ENCODE measurements at regions of chr14 and their contacts with region 1.

Region 1: GRCh38 chr14:64986578-64987571 is at the start of gene FNTB:
- DNase-seq: peak; percentile 96
- ATAC-seq: peak; percentile 98 to 99 (median 98)
- H3K4me3 ChIP-seq: peak within 1 kb of the TSS; percentile 54 to 94 (median 80)
- H3K27ac ChIP-seq: peak within 1 kb of the TSS; percentile 9 to 94 (median 87)
- H3K4me1 ChIP-seq: peaks cover 5 to 44% (median 20%) of the 10 kb centered on the region in 9 donors
- H3K27me3 ChIP-seq: no peaks in the 10 kb centered on the region
- CTCF ChIP-seq: peak; percentile 55 to 97 (median 83)
- total RNA-seq, gene FNTB: 14.6 to 20.8 (median 16.9) TPM

Region 2: DNA sequence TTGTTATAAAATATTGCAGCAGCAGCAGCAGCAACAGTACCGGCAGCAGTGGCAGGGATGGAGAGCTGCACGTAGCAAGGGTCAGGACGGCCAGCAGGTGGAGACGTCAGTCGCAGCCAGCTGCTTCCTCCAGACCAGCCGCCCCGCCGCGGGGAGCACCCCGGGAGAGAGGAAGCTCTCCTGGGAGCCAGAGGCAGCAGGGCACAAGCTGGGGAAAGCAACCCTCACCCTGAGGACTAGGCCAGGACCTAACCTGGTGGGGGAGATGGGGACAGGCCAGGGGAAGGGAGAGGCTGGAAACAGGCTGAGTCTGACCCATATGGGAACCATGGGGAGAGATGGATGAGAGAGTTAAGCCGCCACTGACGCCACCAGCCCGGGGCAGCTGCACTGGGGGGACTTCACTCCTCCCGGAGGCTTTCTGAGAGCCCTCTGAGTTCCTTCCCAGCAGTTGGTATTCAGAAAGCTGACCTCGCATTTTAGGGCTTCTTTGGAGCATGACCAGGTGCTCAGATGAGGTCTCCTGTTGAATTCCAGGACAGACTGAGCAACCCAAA is 163.5 kb before region 1 on chr14:
- intact Hi-C with region 1: loop called in 7 of 10 experiments (anchors 2 to 10 kb)
- DNase-seq: peak; percentile 73 to 80
- ATAC-seq: peak; percentile 81 to 91 (median 86)
- H3K4me3 ChIP-seq: peak overlapping the region in 1 of 10 donors; percentile 11
- H3K27ac ChIP-seq: peak overlapping the region in 4 of 10 donors; percentile 18 to 36 (median 24)
- H3K4me1 ChIP-seq: peaks cover 5 to 46% (median 29%) of the 10 kb centered on the region in 9 donors
- H3K27me3 ChIP-seq: peaks cover 0 to 3% (median 0%) of the 10 kb centered on the region in 7 donors
- CTCF ChIP-seq: peak; percentile 34 to 86 (median 79)

Region 3: GRCh38 chr14:64919622-64920021 is 67.3 kb before region 1 on chr14:
- intact Hi-C with region 1: loop called in 4 of 10 experiments (anchors 2 to 10 kb)
- DNase-seq: no peak
- ATAC-seq: no peak
- H3K4me3 ChIP-seq: no peak overlapping the region
- H3K27ac ChIP-seq: peak overlapping the region in 2 of 10 donors; percentile 24 to 36
- H3K4me1 ChIP-seq: peaks cover 12 to 61% (median 56%) of the 10 kb centered on the region in 9 donors
- H3K27me3 ChIP-seq: no peaks in the 10 kb centered on the region
- CTCF ChIP-seq: no peak

Region 4: DNA sequence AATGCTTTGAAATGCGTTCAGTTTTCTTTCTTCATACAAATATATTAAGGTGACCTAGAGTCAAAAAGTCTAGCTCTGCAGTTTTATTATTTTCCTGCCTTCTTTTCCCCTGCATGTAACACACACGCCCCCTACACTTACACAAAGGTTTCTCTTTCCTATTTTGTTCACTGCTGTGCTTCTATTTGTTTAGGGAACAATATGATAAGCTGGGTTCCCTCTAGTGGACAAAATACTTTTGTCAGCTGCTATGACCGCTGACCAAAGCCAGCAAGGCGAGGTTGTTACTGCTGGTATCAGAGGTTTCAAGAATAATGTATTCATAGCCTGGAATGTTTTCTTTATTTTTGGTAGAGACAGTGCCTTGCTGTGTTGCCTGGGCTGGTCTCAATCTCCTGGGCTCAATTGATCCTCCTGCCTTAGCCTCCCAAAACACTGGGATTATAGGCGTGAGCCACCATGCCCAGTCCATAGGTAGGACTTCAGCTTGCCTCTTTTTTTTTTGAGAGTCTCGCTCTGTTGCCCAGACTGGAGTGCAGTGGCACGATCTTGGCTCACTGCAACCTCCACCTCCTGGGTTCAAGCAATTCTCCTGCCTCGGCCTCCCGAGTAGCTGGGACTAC is 33.2 kb after region 1 on chr14:
- intact Hi-C with region 1: loop called in 3 of 10 experiments (anchors 2 to 5 kb)
- DNase-seq: peak in 1 of 2 donors; percentile 33
- ATAC-seq: peak; percentile 65 to 95 (median 90)
- H3K4me3 ChIP-seq: peak overlapping the region in 1 of 10 donors; percentile 1
- H3K27ac ChIP-seq: peak overlapping the region in 2 of 10 donors; percentile 4 to 16
- H3K4me1 ChIP-seq: peaks cover 0 to 15% (median 8%) of the 10 kb centered on the region in 9 donors
- H3K27me3 ChIP-seq: no peaks in the 10 kb centered on the region
- CTCF ChIP-seq: peak; percentile 42 to 80 (median 69)

Region 5: DNA sequence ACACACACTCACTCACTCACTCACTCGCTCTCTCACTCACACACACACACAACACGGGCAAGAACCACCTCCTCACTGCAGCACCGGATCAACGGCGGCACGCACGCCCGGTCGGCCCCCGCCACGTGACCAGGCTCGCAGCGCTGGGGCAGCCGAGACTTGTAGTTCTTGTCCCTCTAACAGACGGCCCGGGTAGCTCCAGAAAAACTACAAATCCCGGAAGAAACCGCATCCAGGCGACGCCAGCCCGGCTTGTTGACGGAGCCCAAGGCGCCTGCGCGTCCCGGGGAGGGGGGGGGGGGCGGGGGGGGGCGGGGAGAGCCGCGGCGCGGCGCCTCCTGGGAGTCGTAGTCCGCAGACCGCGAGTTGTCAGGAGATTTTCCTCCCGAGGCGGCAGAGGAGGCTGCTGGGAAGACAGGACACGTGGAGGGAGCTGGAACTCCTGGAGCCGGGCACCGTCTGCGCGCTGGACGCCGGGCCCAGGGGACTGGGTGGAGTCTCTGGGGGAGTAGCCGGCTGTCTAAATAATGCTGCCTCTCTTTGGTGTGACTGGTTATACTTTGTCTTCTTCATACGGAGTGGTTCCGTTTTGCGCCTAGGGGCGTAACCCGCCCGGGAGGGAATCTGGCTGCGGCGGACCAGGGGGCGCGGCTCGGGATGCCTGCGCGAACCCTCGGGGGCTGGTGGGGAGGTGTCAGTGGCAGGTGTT is 115.7 kb after region 1 on chr14 and contains the start of gene MAX:
- intact Hi-C with region 1: loop called in 4 of 10 experiments (anchors 2 to 10 kb)
- DNase-seq: peak; percentile 97 to 98
- ATAC-seq: peak; percentile 96 to 97 (median 97)
- H3K4me3 ChIP-seq: peak within 1 kb of the TSS; percentile 64 to 98 (median 93)
- H3K27ac ChIP-seq: peak within 1 kb of the TSS; percentile 52 to 98 (median 92)
- H3K4me1 ChIP-seq: peaks cover 10 to 46% (median 39%) of the 10 kb centered on the region in 9 donors
- H3K27me3 ChIP-seq: no peaks in the 10 kb centered on the region
- CTCF ChIP-seq: peak in 1 of 9 donors; percentile 6
- total RNA-seq, gene MAX: 54.5 to 95.7 (median 73.7) TPM

Region 6: GRCh38 chr14:65824285-65824977 is 837.6 kb after region 1 on chr14:
- intact Hi-C with region 1: loop called in 2 of 10 experiments (anchors 5 to 10 kb)
- DNase-seq: peak in 1 of 2 donors; percentile 48
- ATAC-seq: peak in 7 of 8 donors; percentile 55 to 84 (median 71)
- H3K4me3 ChIP-seq: no peak overlapping the region
- H3K27ac ChIP-seq: no peak overlapping the region
- H3K4me1 ChIP-seq: no peaks in the 10 kb centered on the region
- H3K27me3 ChIP-seq: peaks cover 0 to 51% (median 41%) of the 10 kb centered on the region in 7 donors
- CTCF ChIP-seq: peak; percentile 81 to 95 (median 91)